Naive thymus-derived CD4-positive, alpha-beta T cell (primary cell): ENCODE measurements at regions of chr14 and their contacts with region 1.

Region 1: GRCh38 chr14:88385345-88386101 is at the start of gene SPATA7:
- DNase-seq: peak; percentile 45 to 79 (median 62)
- ATAC-seq: peak; percentile 95
- H3K4me3 ChIP-seq: peak within 1 kb of the TSS; percentile 85
- H3K4me3 Mint-ChIP-seq: peak within 1 kb of the TSS; percentile 93 to 97 (median 94)
- H3K27ac ChIP-seq: peak within 1 kb of the TSS; percentile 75
- H3K27ac Mint-ChIP-seq: peak within 1 kb of the TSS; percentile 68 to 88 (median 83)
- H3K4me1 ChIP-seq: peaks cover 7 to 9% of the 10 kb centered on the region in 2 donors
- H3K4me1 Mint-ChIP-seq: peaks cover 6 to 29% (median 20%) of the 10 kb centered on the region in 7 donors
- H3K27me3 ChIP-seq: no peaks in the 10 kb centered on the region
- H3K27me3 Mint-ChIP-seq: peaks cover 0 to 23% (median 0%) of the 10 kb centered on the region in 5 donors
- total RNA-seq, gene SPATA7: 1.9 to 4.3 (median 2.5) TPM

Region 2: DNA sequence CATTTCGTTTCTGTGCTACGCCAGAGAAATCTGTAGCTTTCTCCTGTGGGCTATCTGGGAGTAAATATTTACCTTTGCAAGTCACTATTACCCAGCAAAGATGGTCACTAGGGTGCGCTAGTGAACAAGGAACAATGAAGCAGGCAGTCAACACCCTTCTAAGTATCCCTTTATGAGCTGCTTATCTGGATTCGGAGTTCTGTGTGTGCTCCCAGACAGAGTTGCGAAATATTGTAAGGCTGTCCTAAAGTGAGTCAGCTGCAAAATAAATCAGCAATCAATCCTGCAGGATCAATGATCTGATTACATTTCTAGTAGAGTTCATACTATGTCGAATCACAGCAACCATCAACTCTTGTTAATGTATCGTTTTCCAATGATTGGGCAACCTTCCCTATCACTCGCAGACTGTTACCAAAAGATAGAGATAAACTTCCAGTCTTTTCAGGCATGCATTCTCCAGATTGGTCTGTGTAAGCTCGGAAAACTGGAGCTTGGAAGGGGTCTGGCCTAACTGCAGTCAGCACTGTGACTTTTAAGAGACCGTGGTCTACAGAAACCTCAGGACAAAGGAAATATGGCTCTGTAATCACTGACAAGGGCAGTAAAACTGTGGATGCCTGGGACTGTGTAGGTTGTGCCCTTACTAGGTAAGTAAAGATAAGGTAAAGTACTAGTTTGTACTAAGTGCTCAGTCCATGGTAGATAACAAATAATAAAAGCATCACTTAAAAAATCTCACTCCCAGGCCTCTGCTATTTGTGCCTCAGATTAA is 195.9 kb before region 1 on chr14:
- CTCF ChIA-PET with region 1: no interaction called
- POLR2A ChIA-PET with region 1: no interaction called
- intact Hi-C with region 1: loop called in 1 of 2 experiments (anchors 5 kb)
- DNase-seq: peak in 6 of 9 donors; percentile 19 to 45 (median 21)
- ATAC-seq: peak; percentile 74
- H3K4me3 ChIP-seq: no peak overlapping the region
- H3K4me3 Mint-ChIP-seq: peak overlapping the region in 7 of 10 donors; percentile 6 to 63 (median 42)
- H3K27ac ChIP-seq: no peak overlapping the region
- H3K27ac Mint-ChIP-seq: no peak overlapping the region
- H3K4me1 ChIP-seq: no peaks in the 10 kb centered on the region
- H3K4me1 Mint-ChIP-seq: peaks cover 0 to 6% (median 5%) of the 10 kb centered on the region in 7 donors
- H3K27me3 ChIP-seq: no peaks in the 10 kb centered on the region
- H3K27me3 Mint-ChIP-seq: peaks cover 10 to 30% (median 22%) of the 10 kb centered on the region in 5 donors

Region 3: DNA sequence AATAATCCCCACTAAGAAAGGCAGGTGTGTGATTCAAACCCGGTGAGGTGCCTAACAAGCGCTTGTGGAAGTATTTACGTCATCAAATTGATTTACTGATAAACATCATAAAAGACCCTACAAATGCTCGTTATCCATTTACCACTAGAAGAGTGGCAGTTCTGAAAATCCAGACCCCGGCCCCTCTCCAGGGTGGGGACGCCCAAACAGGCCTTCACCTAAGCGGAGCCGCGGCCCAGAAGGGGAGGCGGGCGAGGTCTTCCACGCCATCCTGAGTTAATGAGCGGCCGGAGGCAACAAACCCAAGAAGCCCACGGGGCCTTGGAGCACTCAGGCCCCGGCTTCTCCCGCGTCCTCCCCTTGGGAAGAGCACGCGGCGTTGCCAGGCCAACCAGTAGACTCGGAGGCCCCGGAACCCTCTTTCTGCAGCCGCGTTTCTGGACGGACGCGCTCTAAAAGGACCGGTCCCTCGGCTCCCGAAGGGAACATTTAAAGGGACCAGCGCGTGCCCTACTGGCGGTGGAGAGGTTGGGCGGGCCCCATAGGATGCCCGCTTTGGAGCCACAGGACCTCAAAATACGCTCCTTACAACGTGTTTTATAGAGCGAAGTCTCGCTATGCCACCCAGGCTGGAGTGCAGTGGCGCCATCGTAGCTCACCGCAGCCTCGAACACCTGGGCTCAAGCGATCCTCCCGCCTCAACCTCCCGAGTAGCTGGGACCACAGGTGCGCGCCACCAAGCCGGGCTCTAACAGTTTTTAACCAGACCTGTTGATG is 165.8 kb after region 1 on chr14:
- CTCF ChIA-PET with region 1: no interaction called
- POLR2A ChIA-PET with region 1: no interaction called
- intact Hi-C with region 1: loop called (anchors 5 to 10 kb)
- DNase-seq: peak in 3 of 9 donors; percentile 31 to 59 (median 33)
- ATAC-seq: peak; percentile 43
- H3K4me3 ChIP-seq: peak overlapping the region; percentile 49
- H3K4me3 Mint-ChIP-seq: peak overlapping the region; percentile 41 to 80 (median 71)
- H3K27ac ChIP-seq: no peak overlapping the region
- H3K27ac Mint-ChIP-seq: no peak overlapping the region
- H3K4me1 ChIP-seq: peaks cover 6 to 7% of the 10 kb centered on the region in 2 donors
- H3K4me1 Mint-ChIP-seq: peaks cover 6 to 29% (median 18%) of the 10 kb centered on the region in 7 donors
- H3K27me3 ChIP-seq: peaks cover 31 to 36% of the 10 kb centered on the region in 2 donors
- H3K27me3 Mint-ChIP-seq: peaks cover 40 to 46% (median 45%) of the 10 kb centered on the region in 5 donors

Region 4: GRCh38 chr14:88824314-88825077 is 439.0 kb after region 1 on chr14 and contains the start of gene TTC8:
- CTCF ChIA-PET with region 1: no interaction called
- POLR2A ChIA-PET with region 1: no interaction called
- intact Hi-C with region 1: loop called in 1 of 2 experiments (anchors 1 kb)
- DNase-seq: peak; percentile 75 to 92 (median 88)
- ATAC-seq: peak; percentile 98
- H3K4me3 ChIP-seq: peak within 1 kb of the TSS; percentile 74
- H3K4me3 Mint-ChIP-seq: peak within 1 kb of the TSS; percentile 72 to 98 (median 90)
- H3K27ac ChIP-seq: peak within 1 kb of the TSS; percentile 85
- H3K27ac Mint-ChIP-seq: peak within 1 kb of the TSS; percentile 97 to 99 (median 99)
- H3K4me1 ChIP-seq: peaks cover 5 to 6% of the 10 kb centered on the region in 2 donors
- H3K4me1 Mint-ChIP-seq: peaks cover 0 to 13% (median 11%) of the 10 kb centered on the region in 7 donors
- H3K27me3 ChIP-seq: no peaks in the 10 kb centered on the region
- H3K27me3 Mint-ChIP-seq: peaks cover 0 to 30% (median 8%) of the 10 kb centered on the region in 5 donors
- total RNA-seq, gene TTC8: 1.8 to 3.4 (median 2.1) TPM